ENCODE measurements at regions of chr15 and their contacts with region 1.

Region 1: DNA sequence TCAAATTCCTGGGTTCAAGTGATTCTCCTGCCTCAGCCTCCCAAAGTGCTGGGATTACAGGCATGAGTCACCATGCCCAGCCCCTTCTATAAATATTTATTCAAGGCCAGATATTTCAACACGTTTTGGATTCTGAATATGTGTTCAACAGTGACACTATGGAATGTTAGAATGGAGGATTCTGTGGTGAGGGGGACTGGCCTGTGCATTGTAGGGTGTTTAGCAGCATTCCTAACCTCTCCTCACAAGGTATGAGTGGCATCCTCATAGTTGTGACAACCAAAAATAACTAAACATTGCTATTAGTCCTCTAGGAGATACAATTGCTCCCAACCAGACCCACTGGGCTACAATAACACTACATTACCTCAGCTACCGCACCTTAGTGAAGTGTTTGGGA is 104.0 kb upstream of the ATP10A start:
- DNase-seq: no peak
- ATAC-seq: no peak
- H3K4me3 ChIP-seq: no peak overlapping the region
- H3K27ac ChIP-seq: no peak overlapping the region
- H3K4me1 ChIP-seq: no peaks in the 10 kb centered on the region
- H3K27me3 ChIP-seq: peaks cover 3% of the 10 kb centered on the region

Region 2: GRCh38 chr15:26028086-26028740 is 61.1 kb after region 1 on chr15:
- intact Hi-C with region 1: loop called in 1 of 4 experiments (anchors 10 kb)
- DNase-seq: no peak
- ATAC-seq: no peak
- H3K4me3 ChIP-seq: no peak overlapping the region
- H3K27ac ChIP-seq: no peak overlapping the region
- H3K4me1 ChIP-seq: no peaks in the 10 kb centered on the region
- H3K27me3 ChIP-seq: no peaks in the 10 kb centered on the region

Measured in right cardiac atrium (tissue), 5 donors.